ENCODE measurements at regions of chrX and their contacts with region 1.

Region 1: DNA sequence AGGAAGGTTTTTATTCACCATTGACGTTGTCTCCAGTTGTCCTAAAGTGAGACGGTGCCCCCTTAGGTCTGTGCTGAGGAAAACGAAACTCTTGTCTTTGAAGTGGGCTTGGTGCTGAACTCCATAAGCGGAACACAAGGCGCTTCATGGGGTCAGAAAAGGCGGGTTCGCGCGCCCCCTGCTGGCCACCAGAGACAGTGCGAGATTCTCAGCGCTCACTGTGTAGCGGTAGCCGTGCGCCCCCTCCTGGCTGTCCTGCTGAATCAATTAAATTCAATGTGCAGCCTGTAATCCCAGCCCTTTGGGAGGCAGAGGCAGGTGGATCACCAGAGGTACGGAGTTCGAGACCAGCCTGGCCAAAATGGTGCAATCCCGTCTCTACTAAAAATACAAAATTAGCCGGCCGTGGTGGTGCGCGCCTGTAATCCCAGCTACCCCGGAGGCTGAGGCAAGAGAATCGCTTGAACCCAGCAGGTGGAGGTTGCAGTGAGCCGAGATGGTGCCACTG is 64.1 kb downstream of the RLIM start:
- DNase-seq: peak; percentile 35
- ATAC-seq: peak; percentile 98
- H3K4me3 ChIP-seq: no peak overlapping the region
- H3K27ac ChIP-seq: no peak overlapping the region
- H3K4me1 ChIP-seq: no peaks in the 10 kb centered on the region
- H3K27me3 ChIP-seq: no peaks in the 10 kb centered on the region
- CTCF ChIP-seq: peak; percentile 97 to 99 (median 98)
- EP300 ChIP-seq: no peak
- POLR2A ChIP-seq: no peak
- RAD21 ChIP-seq: peak; percentile 86

Region 2: DNA sequence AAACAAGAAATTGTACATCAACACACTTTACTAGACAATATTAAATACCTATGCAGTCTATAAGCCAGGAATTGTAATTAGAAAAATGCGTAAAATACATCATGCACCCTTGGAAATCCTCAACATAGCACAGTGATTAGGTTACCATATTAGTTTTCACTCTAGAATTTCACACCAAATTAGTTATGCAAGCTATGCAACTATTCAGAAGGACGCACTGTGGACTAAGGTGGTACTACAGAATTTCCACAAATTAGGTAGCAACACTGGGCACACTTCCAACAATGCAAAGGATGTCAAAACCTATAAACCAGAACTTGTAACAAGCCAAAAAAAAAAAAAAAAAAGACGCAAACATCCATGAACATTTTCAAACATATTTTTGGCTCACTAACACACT is 317.5 kb before region 1 on chrX:
- CTCF ChIA-PET with region 1: no interaction called
- POLR2A ChIA-PET with region 1: no interaction called
- RAD21 ChIA-PET with region 1: no interaction called
- SMC1A ChIA-PET with region 1: no interaction called
- in situ Hi-C with region 1: no loop called
- intact Hi-C with region 1: loop called (anchors 5 kb)
- DNase-seq: no peak
- ATAC-seq: peak; percentile 71
- H3K4me3 ChIP-seq: no peak overlapping the region
- H3K27ac ChIP-seq: no peak overlapping the region
- H3K4me1 ChIP-seq: no peaks in the 10 kb centered on the region
- H3K27me3 ChIP-seq: no peaks in the 10 kb centered on the region
- CTCF ChIP-seq: no peak; a peak in 1 of 6 replicates
- EP300 ChIP-seq: no peak
- POLR2A ChIP-seq: no peak
- RAD21 ChIP-seq: no peak

Region 3: GRCh38 chrX:74353984-74354383 is 196.4 kb before region 1 on chrX:
- CTCF ChIA-PET with region 1: no interaction called
- POLR2A ChIA-PET with region 1: no interaction called
- RAD21 ChIA-PET with region 1: no interaction called
- SMC1A ChIA-PET with region 1: no interaction called
- in situ Hi-C with region 1: no loop called
- intact Hi-C with region 1: no loop called
- DNase-seq: no peak
- ATAC-seq: no peak
- H3K4me3 ChIP-seq: no peak overlapping the region
- H3K27ac ChIP-seq: no peak overlapping the region
- H3K4me1 ChIP-seq: no peaks in the 10 kb centered on the region
- H3K27me3 ChIP-seq: no peaks in the 10 kb centered on the region
- CTCF ChIP-seq: no peak
- EP300 ChIP-seq: no peak
- POLR2A ChIP-seq: no peak
- RAD21 ChIP-seq: no peak

Region 4: GRCh38 chrX:74382613-74383012 is 167.7 kb before region 1 on chrX:
- CTCF ChIA-PET with region 1: interaction called, 8 read pairs
- POLR2A ChIA-PET with region 1: no interaction called
- RAD21 ChIA-PET with region 1: no interaction called
- SMC1A ChIA-PET with region 1: interaction called, 3 read pairs
- in situ Hi-C with region 1: loop called (anchors 5 kb)
- intact Hi-C with region 1: loop called (anchors 1 kb)
- DNase-seq: peak; percentile 3
- ATAC-seq: peak; percentile 100
- H3K4me3 ChIP-seq: no peak overlapping the region
- H3K27ac ChIP-seq: no peak overlapping the region
- H3K4me1 ChIP-seq: no peaks in the 10 kb centered on the region
- H3K27me3 ChIP-seq: no peaks in the 10 kb centered on the region
- CTCF ChIP-seq: peak; percentile 80 to 91 (median 85)
- EP300 ChIP-seq: no peak
- POLR2A ChIP-seq: no peak
- RAD21 ChIP-seq: peak; percentile 56

Region 5: GRCh38 chrX:74492720-74493201 is 57.6 kb before region 1 on chrX:
- CTCF ChIA-PET with region 1: interaction called, 3 read pairs
- POLR2A ChIA-PET with region 1: no interaction called
- RAD21 ChIA-PET with region 1: no interaction called
- SMC1A ChIA-PET with region 1: interaction called, 3 read pairs
- in situ Hi-C with region 1: no loop called
- intact Hi-C with region 1: loop called (anchors 1 kb)
- DNase-seq: no peak
- ATAC-seq: peak; percentile 84
- H3K4me3 ChIP-seq: no peak overlapping the region
- H3K27ac ChIP-seq: no peak overlapping the region
- H3K4me1 ChIP-seq: no peaks in the 10 kb centered on the region
- H3K27me3 ChIP-seq: no peaks in the 10 kb centered on the region
- CTCF ChIP-seq: peak; percentile 26 to 35 (median 28); a peak in 5 of 6 replicates
- EP300 ChIP-seq: no peak
- POLR2A ChIP-seq: no peak
- RAD21 ChIP-seq: peak; percentile 56

Region 6: GRCh38 chrX:75603833-75604232 is 1053.5 kb after region 1 on chrX:
- CTCF ChIA-PET with region 1: no interaction called
- POLR2A ChIA-PET with region 1: no interaction called
- RAD21 ChIA-PET with region 1: no interaction called
- SMC1A ChIA-PET with region 1: no interaction called
- in situ Hi-C with region 1: no loop called
- intact Hi-C with region 1: loop called (anchors 5 kb)
- DNase-seq: no peak
- ATAC-seq: peak; percentile 69
- H3K4me3 ChIP-seq: no peak overlapping the region
- H3K27ac ChIP-seq: no peak overlapping the region
- H3K4me1 ChIP-seq: no peaks in the 10 kb centered on the region
- H3K27me3 ChIP-seq: no peaks in the 10 kb centered on the region
- CTCF ChIP-seq: peak; percentile 51 to 59 (median 59); a peak in 5 of 6 replicates
- EP300 ChIP-seq: no peak
- POLR2A ChIP-seq: no peak
- RAD21 ChIP-seq: peak; percentile 68